ENCODE measurements at regions of chr15 and their contacts with region 1.

Region 1: GRCh38 chr15:68783226-68784058 is 37.3 kb downstream of the ANP32A start:
- DNase-seq: peak; percentile 72
- ATAC-seq: peak; percentile 91
- H3K4me3 Mint-ChIP-seq: no peak overlapping the region
- H3K27ac Mint-ChIP-seq: peak overlapping the region; percentile 75
- H3K4me1 Mint-ChIP-seq: peaks cover 58% of the 10 kb centered on the region
- H3K27me3 Mint-ChIP-seq: no peaks in the 10 kb centered on the region

Region 2: DNA sequence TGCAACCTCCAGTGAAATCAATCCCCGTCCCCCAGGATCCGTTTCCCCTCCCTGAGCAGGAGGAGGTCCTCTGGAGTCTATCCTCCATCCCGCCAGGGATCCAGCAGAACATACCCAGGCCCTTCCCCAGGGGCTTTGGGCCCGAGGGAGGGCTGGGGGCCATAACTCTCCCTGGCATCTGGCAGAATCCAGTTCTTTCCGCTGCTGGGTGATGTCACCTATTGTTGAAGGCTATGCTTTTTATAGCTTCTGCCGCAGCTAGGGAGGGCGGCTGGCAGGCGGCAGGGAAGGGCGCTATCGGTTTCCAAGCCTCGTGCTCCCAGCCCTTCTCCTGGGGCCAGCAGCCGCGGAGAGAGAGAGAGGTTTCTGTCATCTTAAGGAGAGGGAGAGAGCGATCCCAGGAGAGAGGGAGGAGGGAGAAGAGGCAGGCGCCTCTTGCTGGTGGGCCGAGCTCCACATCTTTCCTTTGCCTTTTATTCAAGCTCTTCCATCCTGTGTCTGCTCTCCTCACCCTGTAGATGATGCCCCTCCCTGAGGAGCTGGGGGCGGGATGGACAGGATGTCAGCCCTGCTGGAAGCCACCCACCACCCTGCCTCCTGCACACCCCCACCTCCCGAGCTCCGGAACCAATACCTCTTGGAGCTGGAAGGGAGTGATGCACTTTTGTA is 82.9 kb before region 1 on chr15:
- CTCF ChIA-PET with region 1: no interaction called
- POLR2A ChIA-PET with region 1: no interaction called
- DNase-seq: no peak
- ATAC-seq: no peak
- H3K4me3 Mint-ChIP-seq: no peak overlapping the region
- H3K27ac Mint-ChIP-seq: no peak overlapping the region
- H3K4me1 Mint-ChIP-seq: no peaks in the 10 kb centered on the region
- H3K27me3 Mint-ChIP-seq: peaks cover 9% of the 10 kb centered on the region

Region 3: DNA sequence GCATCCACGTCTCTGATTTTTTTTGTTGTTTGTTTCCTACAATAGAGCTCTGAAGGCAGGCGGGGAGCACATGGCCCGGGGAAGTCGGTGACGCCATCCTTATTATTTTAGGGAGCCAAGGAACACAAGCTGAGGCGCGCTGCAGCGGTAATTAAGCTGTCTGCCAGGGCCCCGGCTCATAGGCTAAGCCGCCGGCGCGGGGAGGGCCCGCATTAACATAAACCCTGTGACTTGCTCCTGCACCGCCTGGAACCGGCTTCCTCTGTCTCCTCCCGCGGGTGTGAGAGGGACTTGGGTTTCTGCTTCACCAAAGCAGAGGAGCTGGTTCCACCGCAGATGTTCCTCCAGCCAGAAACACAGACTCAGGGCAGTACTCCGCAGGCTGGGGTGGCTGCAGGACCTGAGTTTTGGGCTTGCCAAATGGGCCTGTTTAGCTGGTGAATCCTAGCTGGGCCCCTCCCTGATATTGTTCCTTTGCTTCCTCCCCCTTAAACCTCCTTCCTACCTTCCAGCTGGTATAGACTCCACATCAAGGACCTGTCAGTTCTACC is 11.9 kb after region 1 on chr15:
- CTCF ChIA-PET with region 1: interaction called, 39 read pairs
- POLR2A ChIA-PET with region 1: interaction called, 3 read pairs
- DNase-seq: peak; percentile 79
- ATAC-seq: peak; percentile 63
- H3K4me3 Mint-ChIP-seq: peak overlapping the region; percentile 35
- H3K27ac Mint-ChIP-seq: peak overlapping the region; percentile 48
- H3K4me1 Mint-ChIP-seq: peaks cover 98% of the 10 kb centered on the region
- H3K27me3 Mint-ChIP-seq: no peaks in the 10 kb centered on the region

Region 4: DNA sequence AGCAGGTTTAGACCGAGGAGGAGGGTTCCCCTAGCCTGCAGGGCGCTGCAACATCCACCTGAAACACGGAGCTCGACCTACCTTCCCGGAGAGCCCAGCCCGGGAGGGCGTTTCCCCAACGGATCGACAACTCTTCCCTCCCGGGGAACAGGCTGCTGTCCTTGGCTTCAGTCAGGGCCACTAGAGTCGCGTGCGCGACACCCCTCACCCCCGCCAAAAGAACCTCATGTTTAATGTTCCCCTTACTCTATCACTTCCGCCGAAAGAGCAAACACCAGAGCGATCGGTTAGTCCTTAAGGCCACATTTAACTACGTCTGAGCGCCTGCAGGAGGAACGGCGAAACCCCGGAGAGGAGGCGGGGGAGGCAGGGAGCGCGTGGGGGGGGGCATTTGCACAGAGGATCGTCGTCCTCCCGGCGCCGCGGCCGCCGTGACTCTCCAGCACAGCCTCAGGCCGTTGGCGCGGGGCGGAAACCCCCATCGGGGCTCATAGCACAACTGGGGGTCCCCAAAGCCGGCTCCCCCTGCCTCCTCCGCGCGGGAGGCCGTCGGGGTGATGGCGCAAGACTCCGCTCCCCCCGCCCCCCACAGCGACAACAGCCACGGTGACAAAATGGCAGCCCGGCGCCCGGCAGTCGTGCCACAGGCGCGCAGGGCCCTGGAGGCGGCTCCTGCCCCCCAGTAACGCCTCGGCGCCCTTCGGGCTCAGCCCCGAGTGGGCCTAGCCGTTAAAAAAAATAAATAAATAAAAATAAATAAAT is 34.0 kb after region 1 on chr15:
- CTCF ChIA-PET with region 1: interaction called, 16 read pairs
- POLR2A ChIA-PET with region 1: interaction called, 34 read pairs
- DNase-seq: peak; percentile 78
- ATAC-seq: peak; percentile 42
- H3K4me3 Mint-ChIP-seq: peak overlapping the region; percentile 100
- H3K27ac Mint-ChIP-seq: peak overlapping the region; percentile 95
- H3K4me1 Mint-ChIP-seq: peaks cover 42% of the 10 kb centered on the region
- H3K27me3 Mint-ChIP-seq: no peaks in the 10 kb centered on the region

Region 5: GRCh38 chr15:68829068-68829467 is 45.6 kb after region 1 on chr15:
- CTCF ChIA-PET with region 1: interaction called, 75 read pairs
- POLR2A ChIA-PET with region 1: interaction called, 3 read pairs
- DNase-seq: peak; percentile 47
- ATAC-seq: peak; percentile 69
- H3K4me3 Mint-ChIP-seq: no peak overlapping the region
- H3K27ac Mint-ChIP-seq: no peak overlapping the region
- H3K4me1 Mint-ChIP-seq: peaks cover 21% of the 10 kb centered on the region
- H3K27me3 Mint-ChIP-seq: peaks cover 10% of the 10 kb centered on the region

Region 6: DNA sequence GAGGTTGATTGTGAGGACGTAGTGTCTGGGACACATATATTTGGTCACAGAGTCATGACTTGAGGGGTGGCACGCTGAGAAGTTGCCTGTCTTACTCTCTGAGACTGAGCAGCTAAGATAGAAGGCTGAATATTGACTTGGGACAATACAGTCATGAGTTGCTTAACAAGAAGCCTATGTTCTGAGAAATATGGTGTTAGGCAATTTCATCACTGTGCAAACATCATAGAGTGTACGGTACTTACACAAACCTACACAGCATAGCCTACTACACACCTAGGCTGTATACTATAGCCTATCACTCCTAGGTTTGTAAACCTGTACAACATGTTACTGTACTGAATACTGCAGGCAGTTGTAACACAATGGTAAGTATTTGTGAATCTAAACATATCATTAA is 116.6 kb after region 1 on chr15:
- CTCF ChIA-PET with region 1: no interaction called
- POLR2A ChIA-PET with region 1: no interaction called
- DNase-seq: no peak
- ATAC-seq: no peak
- H3K4me3 Mint-ChIP-seq: no peak overlapping the region
- H3K27ac Mint-ChIP-seq: no peak overlapping the region
- H3K4me1 Mint-ChIP-seq: no peaks in the 10 kb centered on the region
- H3K27me3 Mint-ChIP-seq: peaks cover 14% of the 10 kb centered on the region

Measured in activated CD8-positive, alpha-beta T cell treated with anti-CD3 and anti-CD28 coated beads, Interleukin-2, amount 10 ng/mL, durations not matched to agents 7 days and 5 days (primary cell).